Lower lobe of right lung (tissue), 2 donors: ENCODE measurements at regions of chr15 and their contacts with region 1.

Region 1: DNA sequence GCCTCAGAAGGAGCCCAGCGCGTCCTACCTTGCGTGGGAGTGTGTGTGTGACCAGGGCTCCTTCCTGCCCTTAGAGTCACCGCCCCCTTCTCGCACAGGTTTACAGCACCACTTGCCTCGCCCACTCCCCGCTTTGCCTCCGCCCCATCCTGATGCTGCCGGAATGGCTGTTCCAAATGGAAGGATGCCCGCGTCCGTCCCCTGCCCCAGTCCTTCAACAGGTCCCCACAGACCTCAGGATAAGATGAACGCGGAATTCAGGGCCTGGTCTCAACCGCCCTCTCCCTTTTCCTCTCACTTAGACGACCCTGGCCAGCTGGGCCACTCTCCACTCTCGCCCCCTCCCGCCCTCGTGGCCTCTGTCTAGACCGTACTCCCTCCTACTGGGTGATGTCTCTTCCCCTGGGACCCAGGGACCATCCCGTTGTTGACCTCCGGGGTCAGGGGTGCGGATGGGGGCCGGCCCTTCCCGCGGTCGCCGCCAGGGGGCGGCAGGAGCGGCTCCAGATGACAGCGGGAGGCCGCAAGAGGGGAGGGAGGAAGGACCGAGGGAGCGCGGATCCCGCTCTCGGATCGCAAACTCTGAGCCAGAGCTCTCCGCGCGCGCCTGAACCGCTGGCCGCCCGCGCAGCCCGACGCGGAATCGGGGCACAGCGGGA is at the start of gene THSD4:
- DNase-seq: peak; percentile 90
- ATAC-seq: peak; percentile 93 to 94
- H3K4me3 ChIP-seq: peak within 1 kb of the TSS; percentile 69
- H3K27ac ChIP-seq: peak within 1 kb of the TSS; percentile 75
- H3K4me1 ChIP-seq: peaks cover 7% of the 10 kb centered on the region
- H3K27me3 ChIP-seq: no peaks in the 10 kb centered on the region
- CTCF ChIP-seq: peak; percentile 95
- total RNA-seq, gene THSD4: 18.2 TPM

Region 2: DNA sequence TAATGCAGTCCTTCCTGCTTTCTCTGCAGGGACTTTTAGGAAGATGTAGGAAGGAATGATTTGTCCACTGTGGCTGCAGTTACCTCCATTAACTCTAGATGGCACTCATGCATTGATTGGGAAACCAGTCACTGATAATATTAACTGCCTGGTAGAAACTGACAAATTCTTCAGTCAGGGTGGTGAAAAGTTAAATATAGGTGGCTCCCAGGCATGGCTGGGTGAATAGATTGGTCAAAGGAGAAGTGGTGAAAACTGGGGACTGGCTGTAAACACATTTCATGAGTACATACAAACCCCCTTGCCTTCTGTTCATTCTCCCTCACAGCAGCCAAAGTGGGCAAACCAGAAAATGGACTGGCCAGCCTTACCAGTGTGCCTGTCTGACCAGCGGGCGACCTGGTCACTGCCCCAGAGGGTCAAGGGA is 333.7 kb after region 1 on chr15:
- intact Hi-C with region 1: loop called (anchors 10 kb)
- DNase-seq: no peak
- ATAC-seq: peak; percentile 70 to 73
- H3K4me3 ChIP-seq: no peak overlapping the region
- H3K27ac ChIP-seq: no peak overlapping the region
- H3K4me1 ChIP-seq: peaks cover 22% of the 10 kb centered on the region
- H3K27me3 ChIP-seq: no peaks in the 10 kb centered on the region
- CTCF ChIP-seq: peak; percentile 88